A549 (cell line): ENCODE measurements at regions of chr11 and their contacts with region 1.

Region 1: DNA sequence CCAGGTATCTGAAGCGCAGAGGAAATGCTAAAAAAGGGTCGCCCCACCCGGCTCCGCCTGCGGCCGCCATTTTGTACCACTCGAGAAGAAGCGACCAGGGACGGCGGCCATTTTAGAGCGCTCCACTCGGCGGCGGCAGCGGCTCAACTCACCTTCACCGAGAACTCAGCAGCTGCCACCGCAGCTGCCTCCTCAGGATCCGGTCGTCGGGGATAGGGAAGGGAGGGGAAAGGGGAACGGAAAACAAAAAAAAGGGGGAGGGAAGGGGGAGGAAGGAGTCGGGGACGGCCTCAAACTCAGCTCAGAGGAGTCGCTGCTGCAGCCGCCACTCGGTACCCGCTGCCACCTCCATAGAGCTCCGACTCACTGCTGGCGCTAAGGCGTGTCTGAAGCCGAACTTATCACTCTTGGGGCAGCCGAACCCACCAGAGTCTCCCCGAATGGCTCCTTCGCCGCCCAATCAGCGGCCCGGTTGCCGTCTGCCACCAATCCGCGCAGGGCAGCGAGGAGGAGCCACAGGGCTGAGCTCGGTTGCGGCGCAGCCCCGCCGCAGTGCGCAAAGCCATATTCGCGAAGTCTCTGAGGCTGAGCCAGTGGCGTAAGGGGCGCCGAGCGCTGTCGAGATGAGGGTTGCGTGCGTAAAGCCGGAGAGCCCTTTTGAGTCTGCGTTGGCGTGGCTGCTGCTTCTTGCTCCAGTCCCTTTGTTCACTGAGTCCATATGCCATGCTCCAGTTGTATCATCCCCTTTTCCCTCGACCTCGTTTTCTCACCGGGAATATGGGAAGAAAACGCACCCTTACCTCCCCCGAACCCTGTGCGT is at the start of gene EIF4G2:
- DNase-seq: peak; percentile 98 to 99
- ATAC-seq: peak; percentile 96 to 98
- H3K4me3 ChIP-seq: peak within 1 kb of the TSS; percentile 97
- H3K27ac ChIP-seq: peak within 1 kb of the TSS; percentile 95 to 99
- H3K4me1 ChIP-seq: peaks cover 43% of the 10 kb centered on the region
- CTCF ChIP-seq: no peak
- EP300 ChIP-seq: peak in 1 of 2 experiments; percentile 17; a peak in 1 of 5 replicates
- POLR2A ChIP-seq: peak; percentile 98
- RAD21 ChIP-seq: peak in 1 of 2 experiments; percentile 12; a peak in 2 of 5 replicates
- polyA plus RNA-seq, gene EIF4G2: 1,171 and 1,351 TPM in 2 replicates

Region 2: DNA sequence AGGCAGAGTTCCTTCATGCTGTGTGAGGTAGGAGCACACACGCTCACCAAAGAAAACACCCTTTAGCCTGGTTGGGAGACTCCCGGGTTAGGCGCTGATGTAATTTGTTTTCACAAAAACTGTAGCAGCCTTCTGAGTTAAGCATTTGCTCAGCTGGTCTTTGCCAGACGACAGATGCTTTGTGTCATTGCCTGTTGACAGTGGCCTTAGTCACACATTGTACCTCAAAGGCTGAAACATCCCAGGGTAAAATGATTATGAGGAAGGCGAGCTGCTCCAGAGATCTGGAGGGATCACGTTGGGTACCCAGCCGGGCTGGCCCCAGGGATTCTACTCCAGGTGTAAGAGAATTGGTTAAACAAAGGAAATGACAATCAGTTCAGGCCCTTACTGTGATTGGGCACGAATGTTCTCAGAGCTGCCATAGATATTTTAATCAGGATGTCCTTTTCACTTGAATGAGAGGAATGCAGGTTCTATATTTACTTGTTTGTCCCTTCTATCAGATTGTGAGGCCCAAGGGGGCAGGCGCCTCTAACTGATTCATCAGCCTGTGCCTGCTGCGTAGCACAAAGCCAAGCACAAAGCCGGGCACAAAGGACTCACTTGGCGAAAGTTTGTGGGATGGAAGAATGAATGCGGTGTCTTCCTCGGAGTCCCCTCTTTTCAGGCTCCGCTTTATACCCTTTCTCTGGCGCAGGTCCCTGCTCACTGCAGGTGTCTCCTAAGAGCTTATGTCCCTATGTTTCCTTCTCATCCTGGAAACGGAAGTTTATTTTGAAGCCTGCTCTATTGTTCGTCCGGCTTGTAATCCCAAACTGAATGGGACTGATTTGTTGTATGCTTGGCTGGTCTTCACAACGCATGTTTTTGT is 456.8 kb before region 1 on chr11:
- CTCF ChIA-PET with region 1: no interaction called
- POLR2A ChIA-PET with region 1: no interaction called
- DNase-seq: peak; percentile 21 to 59
- ATAC-seq: peak; percentile 66 to 73
- H3K4me3 ChIP-seq: no peak overlapping the region
- H3K27ac ChIP-seq: peak overlapping the region; percentile 50 to 68
- H3K4me1 ChIP-seq: peaks cover 33% of the 10 kb centered on the region
- CTCF ChIP-seq: no peak
- EP300 ChIP-seq: no peak
- POLR2A ChIP-seq: no peak
- RAD21 ChIP-seq: no peak

Region 3: DNA sequence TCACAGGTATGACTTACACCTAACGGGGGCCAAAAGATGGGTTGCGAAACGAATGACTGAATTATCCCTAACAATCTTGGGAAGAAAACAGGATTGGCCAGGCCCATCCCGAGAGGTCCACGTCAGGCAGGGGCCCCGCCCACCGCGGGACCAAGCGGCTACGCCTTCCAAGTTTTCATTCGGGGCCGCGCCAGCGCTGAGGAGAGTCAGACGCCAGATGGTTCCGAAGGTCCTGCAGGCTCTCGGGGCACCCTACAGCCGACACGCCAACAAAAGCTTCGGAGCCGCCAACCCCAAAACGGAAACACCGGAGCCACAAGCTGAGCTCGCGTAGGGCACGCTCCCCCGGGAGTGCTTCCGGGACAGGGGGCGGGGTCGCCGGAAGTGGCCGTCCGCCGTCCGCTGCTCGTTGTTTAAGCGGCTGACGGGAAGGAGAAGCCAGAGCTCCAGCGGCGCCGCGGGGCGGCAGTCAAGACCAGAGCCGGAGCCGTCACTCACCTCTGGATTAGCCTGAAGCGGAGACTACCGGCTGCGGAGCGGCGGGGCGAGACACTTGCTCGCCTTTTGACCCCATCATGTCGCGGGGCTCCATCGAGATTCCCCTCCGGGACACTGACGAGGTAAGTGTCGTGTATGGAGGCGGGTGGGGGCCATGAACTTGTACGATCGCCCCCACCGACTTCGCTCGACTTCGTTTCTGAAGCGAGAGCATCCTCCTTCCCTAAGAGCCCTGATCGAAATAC is 57.8 kb before region 1 on chr11 and contains the start of gene CTR9:
- CTCF ChIA-PET with region 1: no interaction called
- POLR2A ChIA-PET with region 1: interaction called, 21 read pairs
- DNase-seq: peak; percentile 85 to 94
- ATAC-seq: peak; percentile 98 to 99
- H3K4me3 ChIP-seq: peak within 1 kb of the TSS; percentile 78
- H3K27ac ChIP-seq: peak within 1 kb of the TSS; percentile 86 to 92
- H3K4me1 ChIP-seq: peaks cover 9% of the 10 kb centered on the region; the same call in 1 of the 3 replicates
- CTCF ChIP-seq: peak; percentile 30
- EP300 ChIP-seq: no peak
- POLR2A ChIP-seq: peak; percentile 76
- RAD21 ChIP-seq: peak; percentile 27 to 45; a peak in 3 of 5 replicates
- polyA plus RNA-seq, gene CTR9: 24.8 and 31.2 TPM in 2 replicates

Region 4: GRCh38 chr11:10828402-10828801 is 19.6 kb after region 1 on chr11:
- CTCF ChIA-PET with region 1: interaction called, 5 read pairs
- POLR2A ChIA-PET with region 1: interaction called, 15 read pairs
- DNase-seq: no peak
- ATAC-seq: no peak
- H3K4me3 ChIP-seq: no peak overlapping the region
- H3K27ac ChIP-seq: no peak overlapping the region
- H3K4me1 ChIP-seq: no peaks in the 10 kb centered on the region
- CTCF ChIP-seq: no peak
- EP300 ChIP-seq: no peak
- POLR2A ChIP-seq: no peak
- RAD21 ChIP-seq: no peak

Region 5: DNA sequence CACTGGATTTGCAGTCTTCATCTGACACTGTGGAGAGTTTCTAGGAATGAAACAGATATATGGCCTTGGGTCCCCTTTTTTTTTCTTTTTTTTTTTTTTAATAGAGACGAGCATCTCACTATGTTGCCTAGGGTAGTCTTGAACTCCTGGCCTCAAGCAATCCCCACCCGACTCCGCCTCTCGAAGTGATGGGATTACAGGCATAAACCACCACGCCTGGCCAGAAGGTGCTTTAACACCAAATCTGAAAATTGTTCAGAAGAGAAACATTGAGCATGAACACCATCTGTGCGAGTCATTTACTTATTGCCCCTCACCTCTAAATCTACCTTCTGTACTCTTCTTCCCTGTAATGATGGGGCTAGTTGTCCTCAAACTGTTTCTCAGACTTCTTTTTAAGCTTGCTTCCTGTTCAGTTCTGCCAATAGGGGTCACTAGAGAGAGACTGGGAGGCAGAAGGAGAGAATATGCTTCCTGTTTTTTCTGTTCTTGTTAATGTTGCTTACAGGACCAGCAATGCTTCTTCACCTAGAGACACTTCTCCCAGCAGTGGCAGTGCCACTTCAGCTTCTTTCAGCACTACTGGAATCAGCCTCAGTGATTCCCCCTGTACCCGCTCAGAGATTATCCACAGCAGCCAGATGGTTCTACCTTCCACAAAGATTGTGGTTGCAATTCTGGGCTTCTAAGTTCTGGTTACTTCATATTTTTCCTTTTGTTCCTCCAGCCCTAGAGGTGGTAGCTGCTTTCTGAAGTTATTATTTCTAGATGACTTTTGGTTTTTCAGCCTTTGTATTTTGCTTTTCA is 69.8 kb after region 1 on chr11:
- CTCF ChIA-PET with region 1: interaction called, 6 read pairs
- POLR2A ChIA-PET with region 1: interaction called, 10 read pairs
- DNase-seq: peak; percentile 31 to 81
- ATAC-seq: peak; percentile 66 to 80; a peak in 5 of 6 replicates
- H3K4me3 ChIP-seq: no peak overlapping the region
- H3K27ac ChIP-seq: peak overlapping the region; percentile 59 to 78
- H3K4me1 ChIP-seq: peaks cover 45% of the 10 kb centered on the region
- CTCF ChIP-seq: peak; percentile 55
- EP300 ChIP-seq: no peak
- POLR2A ChIP-seq: no peak
- RAD21 ChIP-seq: peak; percentile 32 to 48; a peak in 2 of 5 replicates

Region 6: GRCh38 chr11:10899121-10899830 is 90.5 kb after region 1 on chr11:
- CTCF ChIA-PET with region 1: interaction called, 12 read pairs
- POLR2A ChIA-PET with region 1: interaction called, 91 read pairs
- DNase-seq: no peak
- ATAC-seq: peak; percentile 67 to 74
- H3K4me3 ChIP-seq: no peak overlapping the region
- H3K27ac ChIP-seq: peak overlapping the region; percentile 87 to 93
- H3K4me1 ChIP-seq: peaks cover 62% of the 10 kb centered on the region
- CTCF ChIP-seq: no peak
- EP300 ChIP-seq: no peak
- POLR2A ChIP-seq: no peak
- RAD21 ChIP-seq: peak in 1 of 2 experiments; percentile 12; a peak in 3 of 5 replicates

Region 7: DNA sequence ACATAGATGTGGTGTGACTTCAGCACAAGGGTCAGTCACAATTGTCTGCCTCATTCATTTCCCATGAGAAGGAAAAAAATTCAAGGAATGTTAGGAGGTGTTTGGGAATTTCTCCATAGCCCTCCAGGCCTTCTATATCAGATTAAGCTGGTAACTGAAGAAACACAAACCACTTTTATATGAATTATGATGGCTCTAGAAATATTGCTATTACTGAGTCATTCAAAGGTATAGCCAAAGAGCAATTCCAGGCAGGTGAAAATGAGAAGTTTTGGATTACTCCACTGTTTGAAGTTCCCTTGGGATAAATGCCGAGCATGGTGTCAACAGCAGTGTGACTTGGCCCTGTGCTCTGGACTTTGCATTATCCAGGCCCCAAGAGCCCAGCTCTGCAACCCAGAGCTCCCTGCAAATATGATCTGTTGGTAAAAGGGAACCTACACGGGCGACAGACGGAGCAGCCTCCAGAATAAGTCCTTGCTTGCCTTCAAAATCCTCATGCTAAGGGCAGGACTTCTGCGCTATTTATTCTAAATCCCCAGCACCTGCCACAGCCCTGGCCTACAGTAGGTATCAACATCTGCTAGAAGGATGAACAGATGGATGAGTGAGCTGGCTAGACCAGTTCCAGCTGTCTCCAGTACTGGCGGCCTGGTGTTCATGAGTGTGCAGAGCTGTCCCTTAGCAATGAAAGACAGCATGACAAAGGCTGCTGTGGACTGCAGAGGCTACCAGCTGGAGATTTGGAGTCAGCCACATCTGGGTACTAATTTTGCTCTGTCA is 116.6 kb after region 1 on chr11:
- CTCF ChIA-PET with region 1: interaction called, 5 read pairs
- POLR2A ChIA-PET with region 1: interaction called, 82 read pairs
- DNase-seq: peak in 1 of 2 experiments; percentile 48
- ATAC-seq: peak in 1 of 2 experiments; percentile 20; a peak in 3 of 6 replicates
- H3K4me3 ChIP-seq: no peak overlapping the region
- H3K27ac ChIP-seq: peak overlapping the region; percentile 59 to 98; a peak in 5 of 6 replicates
- H3K4me1 ChIP-seq: peaks cover 59% of the 10 kb centered on the region
- CTCF ChIP-seq: no peak
- EP300 ChIP-seq: peak; percentile 16 to 69; a peak in 2 of 5 replicates
- POLR2A ChIP-seq: no peak
- RAD21 ChIP-seq: no peak